CD4-positive, alpha-beta memory T cell (primary cell): ENCODE measurements at regions of chr1 and their contacts with region 1.

Region 1: GRCh38 chr1:218330043-218330623 is 15.0 kb upstream of the TGFB2 start:
- DNase-seq: peak in 3 of 5 donors; percentile 30 to 37 (median 34)
- H3K4me3 ChIP-seq: no peak overlapping the region
- H3K4me3 Mint-ChIP-seq: no peak overlapping the region
- H3K27ac ChIP-seq: no peak overlapping the region
- H3K27ac Mint-ChIP-seq: no peak overlapping the region
- H3K4me1 ChIP-seq: no peaks in the 10 kb centered on the region
- H3K4me1 Mint-ChIP-seq: peaks cover 0 to 5% (median 1%) of the 10 kb centered on the region in 4 donors
- H3K27me3 ChIP-seq: no peaks in the 10 kb centered on the region
- H3K27me3 Mint-ChIP-seq: no peaks in the 10 kb centered on the region

Region 2: DNA sequence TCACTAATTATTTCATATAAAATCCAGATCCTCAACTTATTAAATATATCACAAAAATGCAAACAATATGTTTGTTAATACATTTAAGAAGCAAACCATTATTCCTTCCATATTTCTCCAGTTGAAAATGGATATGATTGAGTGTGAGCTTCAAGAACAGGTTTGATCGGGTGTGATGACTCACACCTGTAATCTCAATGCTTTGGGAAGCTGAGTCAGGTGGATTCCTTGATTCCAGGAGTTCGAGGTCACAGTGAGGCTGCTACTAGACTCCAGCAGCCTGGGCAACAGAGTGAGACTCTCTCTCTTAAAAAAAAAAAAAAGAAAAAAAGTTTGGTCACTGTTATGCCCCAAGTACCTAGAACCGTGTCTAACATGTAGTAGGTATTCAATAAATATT is 88.0 kb before region 1 on chr1:
- CTCF ChIA-PET with region 1: no interaction called
- POLR2A ChIA-PET with region 1: no interaction called
- intact Hi-C with region 1: no loop called
- DNase-seq: no peak
- H3K4me3 ChIP-seq: no peak overlapping the region
- H3K4me3 Mint-ChIP-seq: no peak overlapping the region
- H3K27ac ChIP-seq: no peak overlapping the region
- H3K27ac Mint-ChIP-seq: no peak overlapping the region
- H3K4me1 ChIP-seq: no peaks in the 10 kb centered on the region
- H3K4me1 Mint-ChIP-seq: no peaks in the 10 kb centered on the region
- H3K27me3 ChIP-seq: no peaks in the 10 kb centered on the region
- H3K27me3 Mint-ChIP-seq: peaks cover 4% of the 10 kb centered on the region in 2 donors

Region 3: DNA sequence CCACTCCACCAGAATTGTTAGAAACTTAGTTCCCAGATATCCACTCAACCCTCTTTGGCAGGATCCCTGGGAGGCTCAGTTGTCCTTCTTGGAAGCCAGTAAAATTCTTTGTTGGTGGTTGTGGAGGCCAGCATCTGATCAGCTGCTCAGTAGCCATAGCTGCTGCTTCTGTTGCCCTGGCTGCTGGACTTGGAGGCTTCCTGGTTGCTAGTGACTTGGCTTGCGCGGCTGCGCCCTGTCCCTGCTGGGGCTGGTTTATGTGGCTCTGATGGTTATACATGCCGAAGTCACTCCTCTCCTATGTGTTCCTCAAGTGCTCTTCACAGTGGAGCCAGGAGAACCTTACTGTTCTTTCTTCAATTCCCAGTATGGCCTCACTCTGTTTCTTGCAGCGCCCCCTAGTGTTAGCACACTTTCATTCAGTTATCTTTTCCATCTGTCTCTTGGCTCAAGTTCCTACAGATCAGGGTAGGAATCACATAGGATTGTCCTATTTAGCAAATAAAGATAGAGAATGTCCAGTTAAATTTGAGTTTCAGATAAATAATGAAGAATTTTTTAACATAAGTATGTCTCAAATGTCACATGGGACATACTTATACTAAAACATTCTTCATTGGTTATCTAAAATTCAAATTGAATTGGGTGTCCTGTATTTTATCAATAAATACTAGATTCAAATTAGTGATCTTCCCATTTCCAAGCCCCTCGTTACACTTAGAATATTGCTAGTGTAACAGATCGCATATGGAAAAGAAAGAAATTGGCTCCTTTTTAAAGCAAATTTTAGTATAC is 191.4 kb after region 1 on chr1:
- CTCF ChIA-PET with region 1: interaction called, 18 read pairs
- POLR2A ChIA-PET with region 1: no interaction called
- intact Hi-C with region 1: loop called (anchors 2 kb)
- DNase-seq: peak in 3 of 5 donors; percentile 2 to 10 (median 7)
- H3K4me3 ChIP-seq: no peak overlapping the region
- H3K4me3 Mint-ChIP-seq: no peak overlapping the region
- H3K27ac ChIP-seq: no peak overlapping the region
- H3K27ac Mint-ChIP-seq: no peak overlapping the region
- H3K4me1 ChIP-seq: no peaks in the 10 kb centered on the region
- H3K4me1 Mint-ChIP-seq: peaks cover 0 to 1% (median 0%) of the 10 kb centered on the region in 4 donors
- H3K27me3 ChIP-seq: no peaks in the 10 kb centered on the region
- H3K27me3 Mint-ChIP-seq: peaks cover 2 to 5% of the 10 kb centered on the region in 2 donors

Region 4: GRCh38 chr1:219385786-219386427 is 1055.8 kb after region 1 on chr1:
- CTCF ChIA-PET with region 1: no interaction called
- POLR2A ChIA-PET with region 1: no interaction called
- intact Hi-C with region 1: loop called (anchors 1 kb)
- DNase-seq: no peak
- H3K4me3 ChIP-seq: no peak overlapping the region
- H3K4me3 Mint-ChIP-seq: no peak overlapping the region
- H3K27ac ChIP-seq: no peak overlapping the region
- H3K27ac Mint-ChIP-seq: no peak overlapping the region
- H3K4me1 ChIP-seq: no peaks in the 10 kb centered on the region
- H3K4me1 Mint-ChIP-seq: no peaks in the 10 kb centered on the region
- H3K27me3 ChIP-seq: no peaks in the 10 kb centered on the region
- H3K27me3 Mint-ChIP-seq: no peaks in the 10 kb centered on the region

Region 5: DNA sequence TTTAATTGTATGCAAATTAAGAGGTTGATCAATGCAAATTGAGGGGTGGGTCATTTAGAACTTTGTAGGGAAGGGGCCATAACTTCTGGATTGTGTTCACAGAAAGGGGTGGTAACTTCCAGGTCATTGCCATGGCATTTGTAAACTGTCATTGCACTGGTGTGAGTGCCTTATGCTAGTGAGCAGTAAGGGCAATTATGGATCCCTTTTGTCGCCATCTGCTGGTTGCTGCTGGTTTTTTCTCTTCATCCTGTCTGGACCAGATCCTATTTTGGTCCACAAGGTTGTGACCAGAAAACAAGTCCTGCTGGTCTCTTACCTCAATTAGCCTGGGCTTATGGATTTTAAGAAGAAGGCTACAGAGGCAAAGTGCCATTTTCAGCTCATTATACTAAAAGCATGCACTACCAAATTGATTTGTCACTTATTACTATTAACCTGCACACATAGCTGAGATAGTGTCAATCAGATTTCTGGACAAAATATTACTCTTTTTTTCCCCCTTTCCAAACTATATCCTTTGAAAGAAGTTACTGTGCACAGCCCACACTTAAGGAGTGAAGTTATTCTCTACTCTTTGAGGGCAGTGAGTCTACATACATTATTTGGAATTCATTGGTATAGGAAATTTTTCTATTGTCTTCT is 1086.6 kb after region 1 on chr1:
- CTCF ChIA-PET with region 1: interaction called, 10 read pairs
- POLR2A ChIA-PET with region 1: no interaction called
- intact Hi-C with region 1: no loop called
- DNase-seq: peak in 4 of 5 donors; percentile 12 to 33 (median 20)
- H3K4me3 ChIP-seq: no peak overlapping the region
- H3K4me3 Mint-ChIP-seq: no peak overlapping the region
- H3K27ac ChIP-seq: no peak overlapping the region
- H3K27ac Mint-ChIP-seq: no peak overlapping the region
- H3K4me1 ChIP-seq: no peaks in the 10 kb centered on the region
- H3K4me1 Mint-ChIP-seq: no peaks in the 10 kb centered on the region
- H3K27me3 ChIP-seq: no peaks in the 10 kb centered on the region
- H3K27me3 Mint-ChIP-seq: no peaks in the 10 kb centered on the region

Region 6: DNA sequence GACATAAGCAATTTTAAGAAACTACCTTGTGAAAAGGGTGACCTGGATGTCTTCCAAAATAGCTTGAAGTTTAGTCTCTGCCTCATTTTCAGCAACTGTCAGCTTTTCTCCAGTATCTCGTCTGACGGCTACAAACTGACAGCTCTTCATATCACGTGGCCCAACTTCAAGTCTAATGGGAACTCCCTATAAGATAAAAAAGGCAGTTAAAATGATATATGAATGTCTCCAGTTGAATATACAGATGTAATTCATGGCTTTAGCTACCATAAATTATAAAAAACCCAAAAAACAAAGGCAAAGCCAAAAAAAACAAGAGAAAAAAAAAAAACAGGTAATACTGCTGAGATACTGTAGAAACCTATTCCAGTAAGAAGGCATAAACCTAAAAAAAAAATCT is 1643.1 kb after region 1 on chr1:
- CTCF ChIA-PET with region 1: no interaction called
- POLR2A ChIA-PET with region 1: no interaction called
- intact Hi-C with region 1: loop called (anchors 10 kb)
- DNase-seq: no peak
- H3K4me3 ChIP-seq: no peak overlapping the region
- H3K4me3 Mint-ChIP-seq: no peak overlapping the region
- H3K27ac ChIP-seq: no peak overlapping the region
- H3K27ac Mint-ChIP-seq: peak overlapping the region in 1 of 7 donors; percentile 10
- H3K4me1 ChIP-seq: no peaks in the 10 kb centered on the region
- H3K4me1 Mint-ChIP-seq: no peaks in the 10 kb centered on the region
- H3K27me3 ChIP-seq: no peaks in the 10 kb centered on the region
- H3K27me3 Mint-ChIP-seq: no peaks in the 10 kb centered on the region